Adrenal gland (tissue), 19 donors: ENCODE measurements at regions of chr11 and their contacts with region 1.

Region 1: GRCh38 chr11:6022956-6023355 is 7.6 kb downstream of the OR56A1 start:
- DNase-seq: peak in 3 of 7 donors; percentile 28 to 44 (median 33)
- H3K4me3 ChIP-seq: no peak overlapping the region
- H3K27ac ChIP-seq: no peak overlapping the region
- H3K4me1 ChIP-seq: no peaks in the 10 kb centered on the region
- H3K27me3 ChIP-seq: no peaks in the 10 kb centered on the region
- CTCF ChIP-seq: peak; percentile 19 to 78 (median 66)
- POLR2A ChIP-seq: no peak

Region 2: DNA sequence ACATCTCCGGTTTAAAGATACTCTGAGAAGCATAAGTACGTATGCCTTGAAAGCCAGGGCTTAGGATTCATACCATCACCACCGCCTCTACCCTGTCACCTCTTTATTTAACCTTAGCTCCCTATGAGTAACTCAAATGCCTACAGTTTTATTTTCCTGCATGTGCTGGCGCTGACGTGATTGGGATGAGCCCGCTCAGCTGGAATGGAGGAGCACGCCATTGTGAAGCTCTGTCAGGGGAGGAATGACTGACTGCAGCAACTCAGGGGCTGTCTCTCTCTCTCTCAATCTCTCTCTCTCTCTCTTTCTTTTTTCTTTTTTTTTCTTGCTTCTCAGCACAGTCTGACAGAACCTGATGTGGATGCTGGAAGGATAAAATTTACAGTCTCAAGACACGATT is 284.9 kb after region 1 on chr11:
- intact Hi-C with region 1: loop called (anchors 10 kb)
- DNase-seq: no peak
- H3K4me3 ChIP-seq: no peak overlapping the region
- H3K27ac ChIP-seq: no peak overlapping the region
- H3K4me1 ChIP-seq: no peaks in the 10 kb centered on the region
- H3K27me3 ChIP-seq: no peaks in the 10 kb centered on the region
- CTCF ChIP-seq: no peak
- POLR2A ChIP-seq: no peak

Region 3: GRCh38 chr11:6315811-6316425 is 293.0 kb after region 1 on chr11:
- intact Hi-C with region 1: loop called in 1 of 2 experiments (anchors 10 kb)
- DNase-seq: peak; percentile 48 to 78 (median 68)
- H3K4me3 ChIP-seq: no peak overlapping the region
- H3K27ac ChIP-seq: no peak overlapping the region
- H3K4me1 ChIP-seq: peaks cover 11 to 18% of the 10 kb centered on the region in 2 donors
- H3K27me3 ChIP-seq: no peaks in the 10 kb centered on the region
- CTCF ChIP-seq: peak; percentile 71 to 82 (median 80)
- POLR2A ChIP-seq: no peak

Region 4: GRCh38 chr11:6353367-6353987 is 330.5 kb after region 1 on chr11:
- intact Hi-C with region 1: loop called (anchors 5 to 10 kb)
- DNase-seq: peak; percentile 16 to 68 (median 48)
- H3K4me3 ChIP-seq: no peak overlapping the region
- H3K27ac ChIP-seq: no peak overlapping the region
- H3K4me1 ChIP-seq: peaks cover 0 to 9% of the 10 kb centered on the region in 2 donors
- H3K27me3 ChIP-seq: no peaks in the 10 kb centered on the region
- CTCF ChIP-seq: peak; percentile 75 to 97 (median 94)
- POLR2A ChIP-seq: no peak